Stomach (tissue), 19 donors: ENCODE measurements at regions of chr6 and their contacts with region 1.

Region 1: DNA sequence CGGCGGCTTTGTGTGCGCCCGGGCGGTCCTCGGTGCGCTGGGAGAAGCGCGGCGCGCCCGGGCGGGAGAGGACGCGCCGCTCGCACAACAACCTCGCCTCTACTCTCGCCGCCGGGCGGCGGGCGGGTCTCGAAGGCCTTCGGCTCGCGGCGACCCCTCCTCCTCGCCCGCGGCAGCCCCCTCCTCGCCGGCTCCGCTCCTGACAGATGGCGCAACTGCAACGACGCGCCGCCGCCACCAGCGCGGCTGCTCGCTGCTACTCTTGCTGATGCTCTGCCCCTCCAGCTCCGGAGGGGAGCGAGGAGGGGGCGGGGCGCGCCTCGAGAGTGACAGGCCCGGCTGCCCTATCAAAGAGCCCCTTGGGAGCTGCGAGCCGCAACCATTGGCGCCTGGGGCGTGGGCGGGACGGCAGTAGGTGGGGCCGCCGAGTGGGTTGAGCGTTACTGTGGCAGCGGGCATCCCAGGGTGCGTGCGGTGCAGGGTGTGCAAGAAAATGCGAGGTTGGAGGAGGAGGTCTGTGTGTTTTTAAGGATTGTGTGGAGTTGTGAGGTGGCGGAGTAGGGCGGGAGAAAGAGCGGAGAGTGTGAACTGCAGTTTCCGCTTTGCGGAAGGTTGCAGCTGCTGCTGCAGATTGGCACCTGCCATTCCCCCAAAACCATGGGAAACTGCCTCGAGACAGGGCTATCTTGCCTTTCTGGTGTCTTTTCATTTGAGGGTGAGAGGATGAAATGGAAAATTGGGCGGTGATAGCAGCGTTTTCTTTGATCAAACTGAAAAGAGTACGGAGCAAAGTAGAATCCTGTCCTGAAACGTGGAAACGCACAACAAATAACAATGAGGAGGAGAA is at the start of gene FYN:
- DNase-seq: peak; percentile 97 to 100
- H3K4me3 ChIP-seq: peak within 1 kb of the TSS; percentile 68 to 88 (median 79)
- H3K27ac ChIP-seq: peak within 1 kb of the TSS; percentile 77 to 92 (median 90)
- H3K4me1 ChIP-seq: peaks cover 5 to 48% (median 36%) of the 10 kb centered on the region in 4 donors
- H3K27me3 ChIP-seq: peaks cover 0 to 11% (median 0%) of the 10 kb centered on the region in 3 donors
- CTCF ChIP-seq: peak in 5 of 7 experiments; percentile 33 to 57 (median 45)
- EP300 ChIP-seq: no peak
- POLR2A ChIP-seq: peak in 1 of 4 donors; percentile 39
- total RNA-seq, gene FYN: 8.4 to 146 (median 81.7) TPM

Region 2: GRCh38 chr6:111721753-111722154 is 151.6 kb before region 1 on chr6:
- intact Hi-C with region 1: loop called (anchors 10 kb)
- DNase-seq: no peak
- H3K4me3 ChIP-seq: no peak overlapping the region
- H3K27ac ChIP-seq: peak overlapping the region in 1 of 5 donors; percentile 9
- H3K4me1 ChIP-seq: peaks cover 11 to 40% (median 26%) of the 10 kb centered on the region in 4 donors
- H3K27me3 ChIP-seq: no peaks in the 10 kb centered on the region
- CTCF ChIP-seq: peak in 4 of 7 experiments; percentile 15 to 37 (median 33)
- EP300 ChIP-seq: no peak
- POLR2A ChIP-seq: no peak

Region 3: DNA sequence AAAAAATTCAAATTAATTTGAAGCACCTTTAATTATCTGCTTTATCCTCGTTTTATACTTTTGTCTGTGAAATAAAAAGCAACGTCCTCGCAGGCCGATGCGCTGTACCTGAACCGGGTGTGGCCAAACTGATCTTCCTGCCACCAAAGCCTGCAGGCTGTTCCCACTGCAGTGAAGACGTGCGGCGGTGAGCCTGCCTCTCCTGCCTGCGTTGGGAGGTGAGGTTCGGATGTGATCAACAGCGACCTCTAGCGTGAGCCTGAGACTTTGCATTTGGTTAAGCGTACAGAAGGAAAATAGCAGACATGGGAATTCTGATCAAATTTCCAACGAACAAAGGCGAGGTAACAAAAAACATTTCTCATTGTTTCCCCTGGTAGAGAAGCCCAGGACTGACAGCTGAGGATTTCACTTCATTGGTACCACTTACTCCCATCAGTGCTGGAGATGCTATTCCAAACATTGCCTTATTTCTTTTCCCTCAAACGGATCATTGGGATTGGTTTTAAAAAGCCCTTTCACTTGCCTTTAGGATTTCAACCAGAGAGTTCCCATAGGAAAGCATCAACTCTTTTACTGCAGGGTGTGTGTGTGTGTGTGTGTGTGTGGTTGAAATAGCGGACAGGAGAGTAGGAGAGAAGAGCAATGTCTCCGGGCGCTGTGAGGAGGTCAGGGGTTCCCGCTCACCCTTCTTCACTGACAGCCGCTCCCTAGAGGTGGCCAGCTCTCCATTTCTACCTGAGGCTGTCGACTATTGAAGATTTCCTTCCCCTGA is 123.9 kb after region 1 on chr6:
- intact Hi-C with region 1: loop called (anchors 10 kb)
- DNase-seq: peak; percentile 82 to 95
- H3K4me3 ChIP-seq: no peak overlapping the region
- H3K27ac ChIP-seq: peak overlapping the region in 2 of 5 donors; percentile 39 to 66
- H3K4me1 ChIP-seq: peaks cover 0 to 11% (median 8%) of the 10 kb centered on the region in 4 donors
- H3K27me3 ChIP-seq: no peaks in the 10 kb centered on the region
- CTCF ChIP-seq: peak in 5 of 7 experiments; percentile 79 to 96 (median 85)
- EP300 ChIP-seq: no peak
- POLR2A ChIP-seq: no peak

Region 4: DNA sequence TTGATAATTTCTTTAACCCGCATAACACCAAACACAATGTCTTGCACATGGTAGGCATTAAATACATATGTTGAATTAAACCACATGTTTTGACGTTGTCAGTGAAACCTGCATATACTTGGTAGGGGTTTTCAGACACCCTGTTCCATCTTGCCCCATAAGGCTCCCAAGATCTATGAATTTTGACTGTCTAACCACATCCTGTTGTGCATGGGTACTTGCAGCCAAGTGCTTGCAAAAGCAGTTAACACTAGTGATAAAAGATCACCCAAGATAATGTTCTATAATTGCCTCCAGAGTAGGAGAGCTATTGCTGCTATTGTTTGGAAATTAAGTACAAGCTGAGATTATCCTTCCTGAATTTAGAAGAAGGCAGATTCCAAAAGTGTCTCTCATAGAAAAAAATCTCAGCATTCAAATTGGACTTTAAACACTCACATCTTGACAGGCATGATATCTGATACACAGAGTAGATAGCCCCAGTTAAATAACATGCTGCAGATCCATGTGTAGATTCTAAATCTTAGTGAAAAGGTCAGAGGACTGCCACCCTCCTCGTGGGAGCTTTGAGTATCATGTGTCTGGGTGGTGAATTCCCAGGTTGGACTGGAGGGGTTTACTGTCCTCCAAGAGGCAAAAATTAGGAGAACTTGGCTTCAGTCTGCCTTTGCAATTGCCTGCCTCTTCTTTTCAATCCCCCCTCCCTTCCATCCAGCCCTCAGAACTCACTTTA is 154.7 kb after region 1 on chr6:
- intact Hi-C with region 1: no loop called
- DNase-seq: peak in 1 of 2 donors; percentile 60
- H3K4me3 ChIP-seq: no peak overlapping the region
- H3K27ac ChIP-seq: no peak overlapping the region
- H3K4me1 ChIP-seq: peaks cover 0 to 34% (median 18%) of the 10 kb centered on the region in 4 donors
- H3K27me3 ChIP-seq: no peaks in the 10 kb centered on the region
- CTCF ChIP-seq: no peak
- EP300 ChIP-seq: no peak
- POLR2A ChIP-seq: no peak